Left ventricle myocardium superior (tissue), 1 donor: ENCODE measurements at regions of chr12 and their contacts with region 1.

Region 1: GRCh38 chr12:10771132-10771733 is 31.2 kb downstream of the TAS2R7 start:
- DNase-seq: no peak
- ATAC-seq: no peak

Region 2: DNA sequence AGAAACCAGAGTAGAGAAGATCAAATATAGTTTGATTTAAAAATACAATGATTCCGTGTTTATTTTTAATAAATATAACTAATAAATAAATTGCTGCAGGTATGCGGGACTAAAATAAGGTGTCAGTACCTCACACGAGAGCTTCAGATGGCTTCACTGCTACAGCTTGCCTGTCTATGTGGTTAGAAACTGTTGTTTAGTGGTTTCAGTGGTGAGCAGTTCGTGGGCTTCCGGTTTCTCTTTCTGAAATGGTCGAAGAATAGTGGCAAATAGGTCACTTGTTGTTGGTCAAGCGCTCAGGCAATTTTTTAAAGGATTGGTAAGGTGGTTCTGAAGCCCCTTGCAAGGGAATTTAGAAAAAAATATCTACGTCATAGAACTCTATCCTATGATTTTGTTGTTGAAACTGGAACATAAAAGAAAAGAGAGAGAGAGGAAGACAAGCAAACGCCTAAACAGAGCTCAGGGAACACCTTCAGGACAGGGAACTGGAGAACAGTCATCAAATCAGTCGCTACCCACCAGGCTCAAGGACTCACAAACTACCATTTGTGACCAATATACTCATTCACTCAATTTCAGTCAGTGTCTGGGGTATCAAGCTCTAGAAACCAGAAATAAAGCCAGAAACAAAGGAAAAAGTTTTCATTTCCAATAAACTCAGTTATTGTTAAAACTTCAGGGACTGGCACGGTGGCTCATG is 527.3 kb before region 1 on chr12:
- intact Hi-C with region 1: no loop called
- DNase-seq: no peak
- ATAC-seq: no peak

Region 3: DNA sequence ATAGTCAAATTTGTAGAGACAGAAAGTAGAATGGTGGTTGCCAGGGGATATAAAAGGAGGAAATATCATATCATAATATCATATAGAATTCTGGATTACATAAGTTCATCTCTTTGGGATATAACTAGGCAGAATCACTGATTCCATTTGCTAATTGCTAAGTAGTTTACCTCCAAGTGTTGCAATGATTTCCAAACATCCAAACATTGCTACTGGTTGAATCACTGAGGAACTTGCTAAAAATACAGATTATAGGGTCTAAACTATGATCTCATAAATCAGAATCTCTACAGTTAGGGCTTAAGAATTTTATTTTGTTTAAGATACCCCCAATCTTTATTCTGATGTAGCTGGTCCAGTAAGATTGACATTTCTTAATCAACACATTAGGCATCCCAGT is 431.6 kb after region 1 on chr12:
- intact Hi-C with region 1: loop called (anchors 5 kb)
- DNase-seq: no peak
- ATAC-seq: no peak

Region 4: GRCh38 chr12:11486623-11487444 is 715.6 kb after region 1 on chr12:
- intact Hi-C with region 1: loop called (anchors 5 kb)
- DNase-seq: peak; percentile 64
- ATAC-seq: peak; percentile 75